ENCODE measurements at regions of chr7 and their contacts with region 1.

Region 1: GRCh38 chr7:106064771-106065585 is 47.1 kb downstream of the SYPL1 start:
- DNase-seq: peak; percentile 93 to 95
- ATAC-seq: peak; percentile 92
- H3K4me3 ChIP-seq: no peak overlapping the region
- H3K27ac ChIP-seq: peak overlapping the region in 1 of 2 donors; percentile 4
- H3K4me1 ChIP-seq: no peaks in the 10 kb centered on the region
- H3K27me3 ChIP-seq: no peaks in the 10 kb centered on the region

Region 2: DNA sequence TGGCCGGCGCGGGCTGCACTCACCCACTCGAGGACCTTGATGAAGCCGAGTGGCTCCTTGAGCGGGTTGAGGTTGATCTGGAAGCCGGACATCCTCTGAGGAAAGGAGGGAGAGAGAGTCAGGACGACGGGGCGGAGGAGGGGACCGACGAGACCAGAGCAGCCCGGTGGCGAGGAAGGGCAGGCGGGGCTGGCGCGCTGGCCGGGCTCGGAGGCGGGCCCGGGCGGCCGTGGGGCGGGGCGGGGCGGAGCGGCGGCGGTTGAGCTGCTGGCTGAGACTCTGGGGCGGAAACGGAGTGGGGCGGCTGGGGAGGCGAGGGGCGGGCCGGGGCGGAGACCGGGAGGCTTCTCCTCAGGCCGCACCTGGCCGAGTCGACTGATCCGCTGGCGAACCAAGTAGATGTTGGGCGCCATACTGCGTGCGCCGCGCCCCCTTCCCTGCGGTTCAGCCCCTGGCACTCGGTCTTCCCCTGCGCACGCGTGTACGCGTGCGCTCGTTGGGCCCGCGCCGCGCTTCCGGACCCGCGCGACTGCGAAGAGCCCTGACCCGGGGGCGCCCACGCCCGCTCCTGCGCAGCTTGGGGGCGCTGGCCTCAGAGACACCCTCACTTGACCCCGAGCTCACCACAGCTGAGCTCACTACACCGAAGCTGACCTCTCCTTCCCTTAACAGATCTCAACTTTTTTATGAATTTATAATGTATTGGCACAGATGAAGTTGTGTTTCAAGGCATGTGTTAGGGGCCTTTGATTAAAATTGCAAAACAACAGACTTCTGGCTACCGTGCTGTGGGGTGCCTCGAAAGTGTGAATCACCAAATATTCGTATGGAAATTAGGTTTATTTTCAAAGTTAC is 47.4 kb after region 1 on chr7 and contains the start of gene SYPL1:
- intact Hi-C with region 1: loop called (anchors 1 to 5 kb)
- DNase-seq: peak; percentile 96 to 97
- ATAC-seq: peak; percentile 97
- H3K4me3 ChIP-seq: peak within 1 kb of the TSS; percentile 62 to 67
- H3K27ac ChIP-seq: peak within 1 kb of the TSS; percentile 76 to 96
- H3K4me1 ChIP-seq: peaks cover 2 to 3% of the 10 kb centered on the region in 2 donors
- H3K27me3 ChIP-seq: no peaks in the 10 kb centered on the region
- total RNA-seq, gene SYPL1: 69.1 to 70.5 TPM

Measured in aorta (tissue), 5 donors.